ENCODE measurements at regions of chr4 and their contacts with region 1.

Region 1: GRCh38 chr4:72112514-72113156 is 80.8 kb downstream of the NPFFR2 start:
- DNase-seq: peak; percentile 98
- H3K4me3 ChIP-seq: no peak overlapping the region
- H3K27ac ChIP-seq: peak overlapping the region; percentile 46
- H3K4me1 ChIP-seq: peaks cover 6% of the 10 kb centered on the region
- H3K27me3 ChIP-seq: no peaks in the 10 kb centered on the region
- CTCF ChIP-seq: no peak

Region 2: DNA sequence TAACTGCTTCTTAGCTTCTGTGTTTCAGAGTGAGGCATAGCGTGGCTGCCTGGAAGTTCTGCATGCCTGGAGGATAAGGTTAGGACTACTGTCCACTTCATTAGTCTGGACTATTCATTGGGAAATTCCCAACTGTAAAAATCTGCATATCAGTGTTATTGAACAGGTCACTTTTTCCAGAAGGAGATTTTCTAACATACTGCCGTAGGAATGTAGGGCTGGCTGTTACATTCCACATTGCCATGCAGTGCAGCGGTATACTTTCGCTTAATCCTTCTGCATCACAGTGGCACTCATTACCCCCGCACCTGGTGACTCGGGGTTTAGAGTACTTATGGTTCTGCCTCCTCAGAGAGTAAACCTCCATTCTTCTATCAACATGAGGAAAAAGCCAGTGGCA is 23.8 kb after region 1 on chr4:
- CTCF ChIA-PET with region 1: no interaction called
- dilution Hi-C with region 1: no loop called
- in situ Hi-C with region 1: no loop called
- intact Hi-C with region 1: loop called (anchors 1 kb)
- DNase-seq: no peak
- H3K4me3 ChIP-seq: no peak overlapping the region
- H3K27ac ChIP-seq: no peak overlapping the region
- H3K4me1 ChIP-seq: no peaks in the 10 kb centered on the region
- H3K27me3 ChIP-seq: no peaks in the 10 kb centered on the region
- CTCF ChIP-seq: no peak